ENCODE measurements at regions of chr12 and their contacts with region 1.

Region 1: DNA sequence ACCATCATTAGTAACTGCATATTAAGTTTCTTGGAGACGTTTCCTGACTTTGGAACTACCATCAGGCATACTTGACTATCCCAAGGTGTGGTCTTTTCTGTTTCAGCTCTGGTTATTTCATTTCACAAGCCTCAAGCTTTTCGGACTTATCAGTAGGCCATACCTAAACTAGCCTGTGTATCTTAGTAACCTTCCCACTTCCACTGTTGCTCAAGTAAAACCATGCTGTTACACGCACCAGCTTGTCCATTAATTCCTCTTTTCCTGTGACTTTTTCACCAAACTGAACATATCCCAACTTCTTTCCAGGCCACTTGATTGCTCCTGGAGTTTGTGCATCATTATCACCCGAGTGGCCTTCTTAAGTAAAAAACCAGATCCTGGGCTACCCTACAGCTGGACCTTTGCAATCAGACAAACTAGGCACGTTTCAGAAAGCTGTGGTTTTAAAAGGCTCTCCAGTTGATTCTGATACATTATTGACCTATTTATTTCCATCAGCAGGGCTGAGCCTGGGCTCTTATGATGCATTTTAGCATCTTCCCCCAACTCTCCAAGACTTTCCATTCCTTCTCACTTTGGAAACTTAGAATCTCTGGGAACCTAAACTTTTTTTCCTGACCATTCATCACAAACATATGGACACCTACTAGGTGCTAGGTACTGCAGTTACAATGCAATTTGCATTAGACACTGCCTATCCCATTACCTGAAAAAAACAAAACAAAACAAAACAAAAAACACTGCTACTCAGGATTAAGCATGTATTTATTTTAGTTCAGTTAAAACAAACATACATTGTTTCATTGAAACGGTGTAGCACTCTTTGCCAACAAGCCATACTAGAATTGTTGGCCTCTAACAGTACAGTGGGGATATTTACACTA is 14.9 kb downstream of the SLC38A2 start:
- DNase-seq: peak; percentile 72
- H3K4me3 Mint-ChIP-seq: no peak overlapping the region
- H3K27ac Mint-ChIP-seq: peak overlapping the region; percentile 7
- H3K4me1 Mint-ChIP-seq: peaks cover 18% of the 10 kb centered on the region
- H3K27me3 Mint-ChIP-seq: no peaks in the 10 kb centered on the region
- CTCF ChIP-seq: no peak

Region 2: DNA sequence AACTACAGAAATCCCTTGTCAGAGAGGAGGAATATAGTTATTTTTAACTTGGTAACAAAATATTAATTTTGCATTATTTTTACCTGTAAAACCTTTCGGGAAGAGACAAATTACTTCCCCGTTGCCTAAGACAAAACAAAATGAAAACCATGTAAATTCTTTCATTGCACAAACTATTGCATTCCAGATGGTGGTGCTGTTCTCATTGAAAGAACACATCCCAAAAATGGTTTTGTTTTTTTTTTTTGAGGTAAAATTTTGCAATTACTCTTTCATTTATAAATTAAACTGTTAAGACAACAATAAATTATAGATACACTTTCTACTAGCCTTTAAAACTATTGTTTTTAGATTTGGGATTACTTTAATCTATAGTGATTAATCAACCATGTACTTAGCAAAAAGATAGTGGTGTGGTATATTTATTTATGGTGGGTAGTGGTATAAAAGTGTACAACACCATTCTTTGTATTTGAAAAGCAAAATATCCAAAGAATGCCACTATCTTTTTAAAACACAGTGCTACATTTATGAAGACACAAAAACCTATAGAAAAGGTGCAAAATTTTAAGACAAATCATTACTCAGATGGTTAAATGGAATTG is 204.3 kb before region 1 on chr12:
- CTCF ChIA-PET with region 1: interaction called, 3 read pairs
- POLR2A ChIA-PET with region 1: interaction called, 6 read pairs
- intact Hi-C with region 1: loop called (anchors 5 kb)
- DNase-seq: peak; percentile 46
- H3K4me3 Mint-ChIP-seq: no peak overlapping the region
- H3K27ac Mint-ChIP-seq: no peak overlapping the region
- H3K4me1 Mint-ChIP-seq: peaks cover 5% of the 10 kb centered on the region
- H3K27me3 Mint-ChIP-seq: no peaks in the 10 kb centered on the region
- CTCF ChIP-seq: peak; percentile 77

Region 3: DNA sequence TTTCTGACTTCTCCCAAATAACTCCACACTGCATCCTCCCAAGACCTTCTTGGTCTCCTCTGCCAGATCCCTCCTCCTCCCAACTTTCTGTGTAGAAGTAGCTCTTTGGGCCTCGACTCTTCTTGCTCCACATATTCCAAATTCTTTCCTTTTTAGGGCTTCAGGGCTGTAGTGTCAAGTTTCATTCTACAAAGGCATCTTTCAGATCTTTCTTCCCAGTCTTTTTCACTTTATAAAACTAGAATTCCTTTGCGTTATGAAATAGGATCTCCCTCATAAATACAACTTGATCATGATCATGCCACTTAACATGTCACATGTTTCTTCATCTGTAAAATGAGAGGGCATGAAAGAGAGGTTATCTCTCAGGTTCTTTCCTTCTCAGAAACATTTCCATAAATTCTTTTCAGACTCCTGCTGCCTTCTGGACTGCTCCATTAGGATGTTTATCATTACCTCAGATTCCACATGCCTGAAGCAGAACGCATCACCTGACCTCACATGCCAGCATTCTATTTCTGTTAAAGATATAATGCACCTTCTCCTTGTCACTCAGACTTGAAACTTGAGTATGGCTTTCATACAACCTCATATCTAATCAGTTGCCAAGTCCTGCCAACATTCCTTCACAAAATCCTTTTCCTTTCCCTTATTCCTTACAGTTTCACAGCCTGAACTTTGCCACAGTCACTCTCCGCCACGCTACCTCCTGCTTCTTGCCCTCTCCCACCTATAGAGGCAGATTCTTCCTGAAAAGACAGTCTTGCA is 97.3 kb before region 1 on chr12:
- CTCF ChIA-PET with region 1: no interaction called
- POLR2A ChIA-PET with region 1: interaction called, 22 read pairs
- intact Hi-C with region 1: no loop called
- DNase-seq: no peak
- H3K4me3 Mint-ChIP-seq: no peak overlapping the region
- H3K27ac Mint-ChIP-seq: no peak overlapping the region
- H3K4me1 Mint-ChIP-seq: peaks cover 14% of the 10 kb centered on the region
- H3K27me3 Mint-ChIP-seq: no peaks in the 10 kb centered on the region
- CTCF ChIP-seq: no peak